T-cell (primary cell): ENCODE measurements at regions of chr7 and their contacts with region 1.

Region 1: GRCh38 chr7:134669845-134670373 is 23.3 kb downstream of the BPGM start:
- DNase-seq: peak; percentile 64 to 92 (median 86)
- ATAC-seq: peak; percentile 96 to 98 (median 96)
- H3K4me3 ChIP-seq: peak overlapping the region in 1 of 2 donors; percentile 12
- H3K4me3 Mint-ChIP-seq: peak overlapping the region; percentile 48 to 74 (median 57)
- H3K27ac ChIP-seq: peak overlapping the region; percentile 84
- H3K27ac Mint-ChIP-seq: peak overlapping the region; percentile 99
- H3K4me1 ChIP-seq: peaks cover 17 to 42% of the 10 kb centered on the region in 2 experiments
- H3K4me1 Mint-ChIP-seq: peaks cover 53 to 60% (median 59%) of the 10 kb centered on the region in 3 donors
- H3K27me3 ChIP-seq: no peaks in the 10 kb centered on the region
- H3K27me3 Mint-ChIP-seq: no peaks in the 10 kb centered on the region

Region 2: GRCh38 chr7:134646425-134647305 is 23.2 kb before region 1 on chr7 and contains the start of gene BPGM:
- CTCF ChIA-PET with region 1: interaction called, 4 to 8 read pairs
- POLR2A ChIA-PET with region 1: interaction called, 6 to 20 read pairs
- DNase-seq: peak; percentile 88 to 100 (median 98)
- ATAC-seq: peak; percentile 94 to 96 (median 96)
- H3K4me3 ChIP-seq: peak within 1 kb of the TSS; percentile 81 to 82
- H3K4me3 Mint-ChIP-seq: no peak within 1 kb of the TSS
- H3K27ac ChIP-seq: peak within 1 kb of the TSS; percentile 94
- H3K27ac Mint-ChIP-seq: no peak within 1 kb of the TSS
- H3K4me1 ChIP-seq: peaks cover 18% of the 10 kb centered on the region in 2 experiments
- H3K4me1 Mint-ChIP-seq: peaks cover 33 to 39% (median 34%) of the 10 kb centered on the region in 3 donors
- H3K27me3 ChIP-seq: no peaks in the 10 kb centered on the region
- H3K27me3 Mint-ChIP-seq: no peaks in the 10 kb centered on the region
- total RNA-seq, gene BPGM: 16.4 to 20.3 (median 18.3) TPM